Colonic mucosa (tissue), 4 donors: ENCODE measurements at regions of chr9 and their contacts with region 1.

Region 1: DNA sequence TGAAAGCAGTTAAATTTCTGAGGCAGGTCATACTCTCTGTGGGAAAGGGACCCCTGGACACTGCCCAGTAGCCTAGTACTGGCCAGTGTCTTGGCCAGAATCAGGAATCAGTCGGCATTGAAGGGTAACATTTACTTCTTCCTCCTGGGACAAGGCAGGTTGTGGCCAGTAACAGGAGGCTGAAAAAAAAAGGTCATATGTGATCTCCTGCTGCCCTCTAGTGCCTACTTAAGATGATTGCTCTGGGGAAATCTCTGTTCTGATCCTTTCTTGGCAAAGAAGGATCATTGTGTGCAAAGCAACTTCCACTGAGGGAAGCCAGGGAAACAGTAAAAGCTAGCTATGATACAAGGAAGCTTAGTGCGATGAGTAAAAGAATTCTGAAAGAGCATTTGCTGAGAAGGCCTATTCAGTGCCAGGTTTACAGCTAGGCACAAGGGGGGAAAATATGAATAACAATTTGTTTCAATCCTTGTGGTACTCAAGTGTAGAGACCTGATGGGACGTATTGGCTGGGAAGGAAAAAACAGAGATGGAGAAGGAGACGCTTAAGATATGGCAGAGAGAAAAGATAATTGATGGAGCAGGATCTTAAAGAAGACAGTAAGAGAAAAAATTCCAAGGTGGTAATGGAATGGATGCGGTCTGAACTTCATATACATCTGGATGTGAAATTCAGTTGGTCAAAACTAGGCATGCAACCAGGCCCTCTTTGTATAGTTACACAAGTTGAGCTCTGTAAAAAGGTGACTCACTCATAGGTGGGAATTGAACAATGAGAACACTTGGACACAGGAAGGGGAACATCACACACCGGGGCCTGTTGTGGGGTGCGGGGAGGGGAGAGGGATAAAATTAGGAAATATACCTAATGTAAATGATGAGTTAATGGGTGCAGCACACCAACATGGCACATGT is 25.8 kb upstream of the TRIM32 start:
- DNase-seq: no peak
- H3K4me3 ChIP-seq: no peak overlapping the region
- H3K27ac ChIP-seq: no peak overlapping the region
- H3K4me1 ChIP-seq: no peaks in the 10 kb centered on the region
- H3K27me3 ChIP-seq: no peaks in the 10 kb centered on the region
- CTCF ChIP-seq: peak; percentile 44

Region 2: GRCh38 chr9:115591584-115591984 is 1069.7 kb before region 1 on chr9:
- intact Hi-C with region 1: loop called (anchors 5 kb)
- DNase-seq: peak; percentile 57
- H3K4me3 ChIP-seq: no peak overlapping the region
- H3K27ac ChIP-seq: no peak overlapping the region
- H3K4me1 ChIP-seq: no peaks in the 10 kb centered on the region
- H3K27me3 ChIP-seq: no peaks in the 10 kb centered on the region
- CTCF ChIP-seq: no peak

Region 3: GRCh38 chr9:115883457-115884329 is 777.6 kb before region 1 on chr9:
- intact Hi-C with region 1: loop called (anchors 10 kb)
- DNase-seq: peak; percentile 23
- H3K4me3 ChIP-seq: no peak overlapping the region
- H3K27ac ChIP-seq: no peak overlapping the region
- H3K4me1 ChIP-seq: no peaks in the 10 kb centered on the region
- H3K27me3 ChIP-seq: no peaks in the 10 kb centered on the region
- CTCF ChIP-seq: no peak